ENCODE measurements at regions of chr13 and their contacts with region 1.

Region 1: GRCh38 chr13:36999054-36999714 is at the start of gene ALG5:
- DNase-seq: peak; percentile 92
- ATAC-seq: peak; percentile 79
- H3K4me3 Mint-ChIP-seq: peak within 1 kb of the TSS; percentile 99
- H3K27ac Mint-ChIP-seq: peak within 1 kb of the TSS; percentile 100
- H3K4me1 Mint-ChIP-seq: peaks cover 36% of the 10 kb centered on the region
- H3K27me3 Mint-ChIP-seq: no peaks in the 10 kb centered on the region
- total RNA-seq, gene ALG5: 32.0 to 33.8 TPM

Region 2: DNA sequence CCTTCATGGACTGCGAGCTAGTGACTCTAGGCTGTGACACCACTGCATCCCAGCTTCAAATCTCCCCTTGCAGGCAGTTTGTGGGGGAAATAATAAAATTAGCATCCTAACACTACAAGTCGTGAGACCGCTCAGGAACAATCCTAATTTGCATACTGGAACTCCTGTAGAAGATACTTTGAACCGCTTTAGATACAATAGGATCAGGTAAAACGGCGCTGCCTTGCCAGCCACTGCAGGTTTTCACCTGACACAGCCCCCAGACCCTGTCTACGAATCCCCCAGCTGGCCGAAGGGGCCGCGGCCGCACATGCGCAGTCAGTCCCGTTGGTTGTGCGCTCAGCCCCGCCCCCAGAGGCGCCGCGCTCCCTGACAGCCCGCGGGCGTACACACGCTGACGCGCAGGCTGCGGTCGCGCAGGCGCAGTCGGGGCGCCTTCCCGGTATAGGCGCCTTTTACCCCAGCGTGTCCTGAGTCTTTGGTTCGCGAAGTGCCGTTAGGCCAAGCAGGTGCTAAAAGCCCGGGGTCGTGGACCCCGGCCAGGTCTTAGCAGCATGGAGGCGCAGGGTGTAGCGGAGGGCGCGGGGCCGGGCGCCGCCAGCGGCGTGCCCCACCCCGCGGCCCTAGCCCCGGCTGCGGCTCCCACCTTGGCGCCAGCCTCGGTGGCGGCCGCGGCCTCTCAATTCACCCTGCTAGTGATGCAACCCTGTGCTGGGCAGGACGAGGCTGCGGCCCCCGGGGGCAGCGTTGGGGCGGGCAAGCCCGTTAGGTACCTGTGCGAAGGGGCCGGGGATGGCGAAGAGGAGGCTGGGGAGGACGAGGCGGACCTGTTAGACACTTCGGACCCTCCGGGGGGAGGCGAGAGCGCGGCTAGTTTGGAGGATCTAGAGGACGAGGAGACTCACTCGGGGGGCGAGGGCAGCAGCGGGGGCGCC is 180.1 kb before region 1 on chr13 and contains the start of gene RFXAP:
- CTCF ChIA-PET with region 1: no interaction called
- POLR2A ChIA-PET with region 1: interaction called, 10 read pairs
- DNase-seq: peak; percentile 93
- ATAC-seq: peak; percentile 93
- H3K4me3 Mint-ChIP-seq: peak within 1 kb of the TSS; percentile 87
- H3K27ac Mint-ChIP-seq: peak within 1 kb of the TSS; percentile 96
- H3K4me1 Mint-ChIP-seq: peaks cover 46% of the 10 kb centered on the region
- H3K27me3 Mint-ChIP-seq: peaks cover 17% of the 10 kb centered on the region
- total RNA-seq, gene RFXAP: 12.8 to 13.9 TPM

Region 3: DNA sequence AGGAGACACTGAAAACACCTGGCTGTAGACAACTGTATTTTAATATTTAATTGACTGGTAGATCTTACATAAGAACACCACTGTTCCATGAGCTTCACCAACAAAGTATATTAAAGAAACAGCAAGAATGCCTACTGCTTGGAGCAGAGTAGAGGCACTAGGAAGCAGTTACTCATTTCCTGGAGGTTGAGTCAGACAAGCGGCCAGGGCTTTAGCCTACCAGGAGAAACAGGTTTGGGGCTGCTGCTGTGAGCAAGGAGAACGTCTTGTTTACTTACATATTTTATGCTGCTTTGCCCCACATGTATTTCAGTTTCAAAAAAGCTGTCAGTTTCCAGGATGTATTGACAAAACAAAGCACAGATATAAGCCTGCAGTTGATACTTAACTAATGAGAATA is 33.4 kb before region 1 on chr13:
- CTCF ChIA-PET with region 1: no interaction called
- POLR2A ChIA-PET with region 1: no interaction called
- DNase-seq: no peak
- ATAC-seq: no peak
- H3K4me3 Mint-ChIP-seq: no peak overlapping the region
- H3K27ac Mint-ChIP-seq: no peak overlapping the region
- H3K4me1 Mint-ChIP-seq: peaks cover 4% of the 10 kb centered on the region
- H3K27me3 Mint-ChIP-seq: no peaks in the 10 kb centered on the region

Region 4: DNA sequence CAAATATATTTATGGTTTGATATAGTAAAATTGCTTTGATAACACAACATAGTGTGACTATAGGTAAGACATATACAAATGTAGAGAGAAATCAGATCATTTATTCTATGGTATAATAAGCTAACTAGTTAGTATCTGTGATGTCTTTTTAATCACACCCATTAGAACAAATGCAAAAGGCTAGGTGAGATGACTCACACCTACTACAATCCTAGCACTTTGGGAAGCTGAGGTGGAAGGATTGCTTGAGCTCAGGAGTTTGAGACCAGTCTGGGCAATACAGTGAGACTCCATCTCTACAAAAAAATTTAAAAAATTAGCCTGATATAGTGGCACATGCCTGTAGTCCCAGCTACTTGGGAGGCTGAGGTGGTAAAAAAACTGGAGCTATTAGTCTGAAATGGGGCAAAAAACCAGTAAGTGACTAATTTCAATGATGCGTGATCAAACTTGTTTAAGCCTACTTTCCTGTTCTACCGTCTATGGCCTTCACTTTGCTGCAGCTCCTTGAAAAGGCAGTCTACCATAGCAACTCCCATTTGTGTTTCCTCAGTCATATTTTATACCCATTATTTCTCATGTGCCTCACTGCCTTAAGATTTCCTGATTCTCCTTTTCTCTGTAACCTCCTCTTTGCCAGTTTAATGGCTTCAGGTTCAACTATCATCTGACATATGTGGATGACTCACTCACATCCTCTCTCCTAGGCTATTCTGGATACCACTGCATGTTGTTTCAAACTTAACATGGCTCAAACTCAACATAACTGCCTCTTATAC is 12.5 kb before region 1 on chr13:
- CTCF ChIA-PET with region 1: interaction called, 4 read pairs
- POLR2A ChIA-PET with region 1: interaction called, 14 read pairs
- DNase-seq: no peak
- ATAC-seq: no peak
- H3K4me3 Mint-ChIP-seq: no peak overlapping the region
- H3K27ac Mint-ChIP-seq: no peak overlapping the region
- H3K4me1 Mint-ChIP-seq: no peaks in the 10 kb centered on the region
- H3K27me3 Mint-ChIP-seq: no peaks in the 10 kb centered on the region

Region 5: DNA sequence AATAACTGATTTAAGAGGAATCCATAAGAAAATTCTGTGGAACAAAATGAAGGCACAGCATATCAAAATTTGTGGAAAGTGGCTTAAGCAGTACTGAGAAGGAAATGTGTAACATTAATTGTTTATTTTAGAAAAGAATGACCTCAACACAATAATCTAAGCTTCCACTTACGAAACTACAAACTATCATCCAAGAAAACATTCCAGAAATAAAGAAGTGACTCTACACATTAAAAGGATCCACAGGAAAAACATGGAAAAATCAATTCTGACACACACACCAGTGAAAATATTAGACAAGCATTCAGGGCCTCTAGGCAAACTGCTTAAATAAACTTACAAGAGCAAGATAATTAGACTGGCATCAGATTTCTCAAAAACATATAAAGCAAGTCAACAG is 15.4 kb after region 1 on chr13:
- CTCF ChIA-PET with region 1: interaction called, 25 read pairs
- POLR2A ChIA-PET with region 1: interaction called, 31 read pairs
- DNase-seq: no peak
- ATAC-seq: no peak
- H3K4me3 Mint-ChIP-seq: no peak overlapping the region
- H3K27ac Mint-ChIP-seq: no peak overlapping the region
- H3K4me1 Mint-ChIP-seq: peaks cover 2% of the 10 kb centered on the region
- H3K27me3 Mint-ChIP-seq: no peaks in the 10 kb centered on the region

Region 6: GRCh38 chr13:37058910-37059847 is 60.0 kb after region 1 on chr13 and contains the start of gene SUPT20H:
- CTCF ChIA-PET with region 1: interaction called, 3 read pairs
- POLR2A ChIA-PET with region 1: interaction called, 19 read pairs
- DNase-seq: peak; percentile 95
- ATAC-seq: peak; percentile 97
- H3K4me3 Mint-ChIP-seq: peak within 1 kb of the TSS; percentile 94
- H3K27ac Mint-ChIP-seq: peak within 1 kb of the TSS; percentile 93
- H3K4me1 Mint-ChIP-seq: peaks cover 34% of the 10 kb centered on the region
- H3K27me3 Mint-ChIP-seq: peaks cover 8% of the 10 kb centered on the region
- total RNA-seq, gene SUPT20H: 67.4 to 71.5 TPM

Region 7: GRCh38 chr13:37194428-37194861 is 195.3 kb after region 1 on chr13:
- CTCF ChIA-PET with region 1: no interaction called
- POLR2A ChIA-PET with region 1: no interaction called
- DNase-seq: no peak
- ATAC-seq: no peak
- H3K4me3 Mint-ChIP-seq: no peak overlapping the region
- H3K27ac Mint-ChIP-seq: no peak overlapping the region
- H3K4me1 Mint-ChIP-seq: no peaks in the 10 kb centered on the region
- H3K27me3 Mint-ChIP-seq: no peaks in the 10 kb centered on the region

Region 8: DNA sequence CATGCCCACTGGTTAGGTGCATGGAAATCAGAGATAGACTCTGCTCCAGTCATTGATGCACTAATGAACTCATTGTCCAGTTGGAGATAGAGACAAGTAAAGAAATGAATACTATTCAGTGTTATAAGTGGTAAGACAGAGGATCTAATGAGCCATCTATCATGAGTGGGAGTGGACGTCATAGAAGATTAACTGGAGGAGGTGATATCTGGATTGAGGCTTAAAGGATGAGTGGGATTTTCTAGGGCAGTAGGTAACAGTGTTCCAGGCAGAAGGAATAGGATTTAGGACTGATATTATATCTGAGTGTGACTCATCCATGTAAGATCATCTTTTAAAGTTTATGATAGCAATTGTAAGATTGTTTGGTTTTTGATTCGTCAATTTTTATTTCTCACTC is 258.5 kb after region 1 on chr13:
- CTCF ChIA-PET with region 1: no interaction called
- POLR2A ChIA-PET with region 1: no interaction called
- DNase-seq: no peak
- ATAC-seq: no peak
- H3K4me3 Mint-ChIP-seq: no peak overlapping the region
- H3K27ac Mint-ChIP-seq: no peak overlapping the region
- H3K4me1 Mint-ChIP-seq: no peaks in the 10 kb centered on the region
- H3K27me3 Mint-ChIP-seq: no peaks in the 10 kb centered on the region

Measured in activated CD8-positive, alpha-beta T cell treated with anti-CD3 and anti-CD28 coated beads, Interleukin-2, amount 10 ng/mL, durations not matched to agents 7 days and 5 days (primary cell).